HepG2 (cell line): ENCODE measurements at regions of chr6 and their contacts with region 1.

Region 1: GRCh38 chr6:109678240-109678639 is 12.8 kb downstream of the AK9 start:
- DNase-seq: no peak
- ATAC-seq: peak; percentile 36; the same call in 1 of the 3 replicates
- H3K4me3 ChIP-seq: peak overlapping the region in 2 of 3 experiments; percentile 54 to 65; a peak in 2 of 6 replicates
- H3K27ac ChIP-seq: no peak overlapping the region
- H3K4me1 ChIP-seq: peaks cover 9% of the 10 kb centered on the region
- H3K27me3 ChIP-seq: no peaks in the 10 kb centered on the region
- CTCF ChIP-seq: no peak
- EP300 ChIP-seq: no peak
- POLR2A ChIP-seq: no peak
- RAD21 ChIP-seq: no peak

Region 2: GRCh38 chr6:108541838-108542759 is 1136.1 kb before region 1 on chr6:
- CTCF ChIA-PET with region 1: no interaction called
- POLR2A ChIA-PET with region 1: no interaction called
- in situ Hi-C with region 1: no loop called
- intact Hi-C with region 1: no loop called
- DNase-seq: peak; percentile 51
- ATAC-seq: peak; percentile 84
- H3K4me3 ChIP-seq: no peak overlapping the region
- H3K27ac ChIP-seq: no peak overlapping the region
- H3K4me1 ChIP-seq: peaks cover 15% of the 10 kb centered on the region
- H3K27me3 ChIP-seq: peaks cover 0 to 11% of the 10 kb centered on the region in 2 experiments; a peak in 1 of 5 replicates
- CTCF ChIP-seq: peak; percentile 92
- EP300 ChIP-seq: no peak
- POLR2A ChIP-seq: no peak
- RAD21 ChIP-seq: peak; percentile 86

Region 3: DNA sequence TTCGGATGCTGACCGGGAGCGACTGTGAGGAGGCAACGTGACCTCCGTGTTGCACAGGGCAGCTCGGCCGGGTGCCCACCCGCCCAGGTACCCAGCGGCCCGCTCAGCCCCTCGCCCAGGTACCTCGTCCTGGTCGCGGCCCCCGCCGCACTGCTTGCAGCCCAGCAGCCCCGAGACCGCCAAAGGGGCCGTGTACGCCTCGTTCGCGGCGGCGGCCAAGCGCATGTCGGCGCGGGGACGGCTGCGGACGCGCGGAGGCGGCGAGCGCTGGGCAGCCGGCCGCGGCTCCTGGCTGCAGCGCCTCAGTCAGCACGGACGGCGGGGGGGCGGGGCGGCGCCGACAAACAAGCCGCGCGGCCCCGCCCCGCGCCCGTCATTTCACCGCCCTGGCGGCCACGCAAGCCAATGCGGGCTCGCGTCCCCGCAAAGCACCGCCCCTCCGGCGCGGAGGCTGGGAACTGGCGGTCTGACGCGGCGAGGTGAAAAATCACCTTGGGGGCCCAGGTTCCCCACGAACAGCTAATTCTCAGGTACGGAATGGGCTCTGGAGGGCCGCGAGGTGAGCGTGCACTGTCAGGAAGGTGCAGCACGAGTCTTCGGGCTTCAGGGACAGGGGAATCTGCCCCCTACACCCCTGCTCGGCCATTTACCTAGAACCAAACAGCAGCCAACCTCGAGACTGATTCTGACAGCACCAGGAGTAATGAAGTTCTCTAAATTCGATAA is 668.8 kb before region 1 on chr6:
- CTCF ChIA-PET with region 1: no interaction called
- POLR2A ChIA-PET with region 1: no interaction called
- in situ Hi-C with region 1: no loop called
- intact Hi-C with region 1: no loop called
- DNase-seq: peak; percentile 72
- ATAC-seq: peak; percentile 98
- H3K4me3 ChIP-seq: peak overlapping the region; percentile 74 to 98 (median 97)
- H3K27ac ChIP-seq: peak overlapping the region; percentile 79
- H3K4me1 ChIP-seq: peaks cover 42% of the 10 kb centered on the region
- H3K27me3 ChIP-seq: no peaks in the 10 kb centered on the region; a peak in 2 of 5 replicates
- CTCF ChIP-seq: no peak
- EP300 ChIP-seq: no peak
- POLR2A ChIP-seq: peak; percentile 54 to 79
- RAD21 ChIP-seq: 0 out of 2 replicates have a peak, but pooled peaks have one; percentile 64

Region 4: GRCh38 chr6:109373762-109374161 is 304.5 kb before region 1 on chr6:
- CTCF ChIA-PET with region 1: no interaction called
- POLR2A ChIA-PET with region 1: no interaction called
- in situ Hi-C with region 1: no loop called
- intact Hi-C with region 1: no loop called
- DNase-seq: no peak
- ATAC-seq: no peak
- H3K4me3 ChIP-seq: no peak overlapping the region
- H3K27ac ChIP-seq: no peak overlapping the region
- H3K4me1 ChIP-seq: peaks cover 10% of the 10 kb centered on the region
- H3K27me3 ChIP-seq: no peaks in the 10 kb centered on the region
- CTCF ChIP-seq: no peak
- EP300 ChIP-seq: no peak
- POLR2A ChIP-seq: no peak
- RAD21 ChIP-seq: no peak

Region 5: DNA sequence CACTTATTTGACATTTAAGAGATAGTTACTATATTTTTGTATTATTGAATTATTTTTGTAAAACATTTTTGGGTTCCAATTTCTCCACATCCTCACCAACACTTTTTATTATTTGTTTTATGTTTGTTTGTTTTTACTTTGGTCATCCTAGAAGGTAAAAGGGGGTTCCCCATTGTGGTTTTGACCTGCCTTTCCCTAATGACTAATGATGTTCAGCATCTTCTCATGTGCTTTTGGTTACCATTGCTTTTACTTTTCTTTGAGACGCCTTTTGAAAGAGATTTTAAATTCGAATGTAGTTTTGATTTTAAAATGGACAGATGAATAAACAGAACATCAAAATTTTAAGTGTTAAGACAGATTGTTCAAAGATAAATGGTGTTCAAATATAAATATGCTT is 34.1 kb before region 1 on chr6:
- CTCF ChIA-PET with region 1: no interaction called
- POLR2A ChIA-PET with region 1: no interaction called
- in situ Hi-C with region 1: no loop called
- intact Hi-C with region 1: loop called (anchors 5 kb)
- DNase-seq: no peak
- ATAC-seq: no peak
- H3K4me3 ChIP-seq: no peak overlapping the region
- H3K27ac ChIP-seq: no peak overlapping the region
- H3K4me1 ChIP-seq: no peaks in the 10 kb centered on the region
- H3K27me3 ChIP-seq: no peaks in the 10 kb centered on the region; a peak in 1 of 5 replicates
- CTCF ChIP-seq: no peak
- EP300 ChIP-seq: no peak
- POLR2A ChIP-seq: no peak
- RAD21 ChIP-seq: no peak